ENCODE measurements at regions of chr2 and their contacts with region 1.

Region 1: GRCh38 chr2:27489498-27490397 is at the start of gene IFT172:
- DNase-seq: peak; percentile 99 to 100
- H3K4me3 ChIP-seq: peak within 1 kb of the TSS; percentile 46
- H3K4me3 Mint-ChIP-seq: peak within 1 kb of the TSS; percentile 85
- H3K27ac Mint-ChIP-seq: peak within 1 kb of the TSS; percentile 92
- H3K4me1 ChIP-seq: peaks cover 9% of the 10 kb centered on the region; the same call in 1 of the 2 replicates
- H3K4me1 Mint-ChIP-seq: peaks cover 6% of the 10 kb centered on the region
- H3K27me3 ChIP-seq: no peaks in the 10 kb centered on the region
- H3K27me3 Mint-ChIP-seq: peaks cover 2% of the 10 kb centered on the region
- CTCF ChIP-seq: no peak
- total RNA-seq, gene IFT172: 17.2 and 21.9 TPM in 2 replicates

Region 2: GRCh38 chr2:27428213-27428977 is 61.4 kb before region 1 on chr2 and contains the start of gene NRBP1:
- CTCF ChIA-PET with region 1: no interaction called
- POLR2A ChIA-PET with region 1: no interaction called
- intact Hi-C with region 1: loop called (anchors 1 kb)
- DNase-seq: peak; percentile 96 to 98
- H3K4me3 ChIP-seq: peak within 1 kb of the TSS; percentile 92
- H3K4me3 Mint-ChIP-seq: peak within 1 kb of the TSS; percentile 89
- H3K27ac Mint-ChIP-seq: peak within 1 kb of the TSS; percentile 94
- H3K4me1 ChIP-seq: peaks cover 19% of the 10 kb centered on the region
- H3K4me1 Mint-ChIP-seq: peaks cover 6% of the 10 kb centered on the region
- H3K27me3 ChIP-seq: no peaks in the 10 kb centered on the region
- H3K27me3 Mint-ChIP-seq: no peaks in the 10 kb centered on the region
- CTCF ChIP-seq: peak in 1 of 2 experiments; percentile 0
- total RNA-seq, gene NRBP1: 148 and 169 TPM in 2 replicates